Activated T-helper 2 cell treated with anti-CD3 and anti-CD28 coated beads, Interferon-gamma antibody, Interleukin-2, Interleukin-4, amounts not matched to agents 10 μg/mL and 5 μg/mL and 100 μg/mL, durations not matched to agents 14 hours and 24 hours and 36 hours (primary cell): ENCODE measurements at regions of chr11 and their contacts with region 1.

Region 1: GRCh38 chr11:126480410-126481302 is 125.2 kb downstream of the ST3GAL4 start:
- DNase-seq: peak; percentile 66
- H3K4me3 Mint-ChIP-seq: peak overlapping the region; percentile 53
- H3K27ac Mint-ChIP-seq: peak overlapping the region; percentile 79
- H3K4me1 Mint-ChIP-seq: peaks cover 16% of the 10 kb centered on the region
- H3K27me3 Mint-ChIP-seq: no peaks in the 10 kb centered on the region

Region 2: DNA sequence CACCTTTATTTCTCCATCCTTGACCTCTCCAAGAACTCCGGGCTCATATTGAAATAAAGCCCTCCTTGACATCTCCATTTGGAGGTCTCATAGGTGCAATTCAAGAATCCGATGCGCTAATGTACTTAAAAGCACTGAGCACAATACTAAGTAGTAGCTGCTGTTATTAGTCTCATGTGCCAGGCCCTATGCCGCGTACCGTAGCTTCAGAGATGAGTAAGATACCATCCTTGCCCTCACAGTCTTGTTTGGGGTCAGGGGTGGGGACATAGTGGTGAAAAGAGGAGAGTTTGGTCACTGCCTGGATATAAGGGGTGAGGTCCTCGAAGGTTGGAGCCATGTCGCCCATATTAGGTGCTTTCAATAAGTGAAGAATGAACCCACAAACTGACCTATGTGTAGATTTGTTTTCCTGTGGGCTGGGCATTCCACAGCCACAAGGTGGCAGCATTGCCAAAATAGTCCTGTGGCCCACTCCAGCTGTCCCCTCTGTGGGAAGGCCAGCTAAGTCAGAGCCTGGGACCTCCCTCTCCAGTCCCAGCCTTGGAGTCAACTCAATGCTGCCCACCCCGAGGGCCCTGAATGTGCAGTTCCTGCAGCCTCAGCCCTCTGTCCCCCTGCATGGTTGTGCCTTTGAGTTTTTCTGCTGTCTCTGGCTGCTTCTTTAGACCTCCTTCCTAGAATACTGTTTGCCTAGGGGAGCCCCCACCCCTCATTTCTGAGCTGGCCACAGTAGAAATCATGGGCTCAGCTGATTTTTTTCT is 170.2 kb before region 1 on chr11:
- intact Hi-C with region 1: loop called (anchors 1 kb)
- DNase-seq: peak; percentile 41
- H3K4me3 Mint-ChIP-seq: no peak overlapping the region
- H3K27ac Mint-ChIP-seq: no peak overlapping the region
- H3K4me1 Mint-ChIP-seq: peaks cover 29% of the 10 kb centered on the region
- H3K27me3 Mint-ChIP-seq: no peaks in the 10 kb centered on the region

Region 3: GRCh38 chr11:126440792-126441514 is 39.7 kb before region 1 on chr11:
- intact Hi-C with region 1: loop called (anchors 1 kb)
- DNase-seq: peak; percentile 66
- H3K4me3 Mint-ChIP-seq: no peak overlapping the region
- H3K27ac Mint-ChIP-seq: no peak overlapping the region
- H3K4me1 Mint-ChIP-seq: peaks cover 6% of the 10 kb centered on the region
- H3K27me3 Mint-ChIP-seq: peaks cover 4% of the 10 kb centered on the region

Region 4: DNA sequence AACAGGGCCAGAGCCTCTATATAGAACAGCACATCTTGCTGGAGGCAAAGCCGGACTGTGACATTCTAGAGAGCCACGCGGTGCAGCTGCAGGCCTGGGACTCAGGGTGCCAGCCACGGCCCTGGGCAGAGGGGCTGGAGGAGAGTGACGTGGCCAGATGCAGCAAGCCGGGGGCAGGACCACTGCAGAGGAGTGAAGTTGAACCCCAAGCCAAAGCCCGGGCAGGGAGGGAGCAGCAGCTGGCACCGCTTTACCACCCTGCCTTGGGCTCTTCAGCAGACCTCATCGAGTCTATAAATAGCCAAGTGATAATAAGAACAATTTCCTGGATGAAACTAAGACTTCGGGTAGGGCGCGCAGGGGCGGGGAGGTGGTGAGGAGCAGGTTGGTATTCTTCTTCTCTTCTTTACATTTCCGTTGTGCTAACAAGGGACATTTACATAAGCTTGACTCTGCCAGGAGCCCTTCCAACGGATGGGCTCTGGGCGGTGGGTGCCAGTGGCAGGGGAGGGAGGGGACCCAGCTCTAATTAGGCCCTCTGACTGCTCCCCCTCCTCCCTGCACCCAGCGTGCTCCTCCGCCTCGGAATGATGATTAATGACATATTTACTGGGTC is 15.0 kb before region 1 on chr11:
- intact Hi-C with region 1: loop called (anchors 2 kb)
- DNase-seq: peak; percentile 34
- H3K4me3 Mint-ChIP-seq: peak overlapping the region; percentile 37
- H3K27ac Mint-ChIP-seq: peak overlapping the region; percentile 75
- H3K4me1 Mint-ChIP-seq: peaks cover 21% of the 10 kb centered on the region
- H3K27me3 Mint-ChIP-seq: peaks cover 11% of the 10 kb centered on the region

Region 5: GRCh38 chr11:126655807-126656128 is 175.1 kb after region 1 on chr11:
- intact Hi-C with region 1: no loop called
- DNase-seq: no peak
- H3K4me3 Mint-ChIP-seq: no peak overlapping the region
- H3K27ac Mint-ChIP-seq: no peak overlapping the region
- H3K4me1 Mint-ChIP-seq: no peaks in the 10 kb centered on the region
- H3K27me3 Mint-ChIP-seq: no peaks in the 10 kb centered on the region